ENCODE measurements at regions of chr12 and their contacts with region 1.

Region 1: DNA sequence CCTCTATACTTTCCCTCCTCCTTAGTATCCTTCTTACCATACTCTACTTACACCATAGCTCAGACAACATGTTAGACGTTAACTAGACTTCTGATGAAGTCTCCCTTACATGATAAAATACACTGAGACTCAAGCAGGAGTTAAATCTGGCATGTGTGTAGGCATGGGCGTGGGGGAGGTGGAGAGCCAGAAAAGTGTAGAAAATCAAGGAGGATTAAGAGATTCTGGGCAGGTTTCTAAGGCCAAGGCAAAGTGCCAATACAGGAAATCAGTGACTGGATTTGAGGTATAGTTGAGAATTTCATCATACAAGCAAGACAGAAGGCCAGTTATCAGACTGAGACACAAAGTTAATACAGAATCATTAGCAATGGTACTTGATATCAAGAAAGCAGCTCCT is 37.4 kb downstream of the EPS8 start:
- DNase-seq: no peak
- H3K4me3 ChIP-seq: no peak overlapping the region
- H3K27ac ChIP-seq: no peak overlapping the region
- H3K4me1 ChIP-seq: peaks cover 0 to 100% (median 54%) of the 10 kb centered on the region in 4 donors
- H3K27me3 ChIP-seq: no peaks in the 10 kb centered on the region
- CTCF ChIP-seq: no peak

Region 2: DNA sequence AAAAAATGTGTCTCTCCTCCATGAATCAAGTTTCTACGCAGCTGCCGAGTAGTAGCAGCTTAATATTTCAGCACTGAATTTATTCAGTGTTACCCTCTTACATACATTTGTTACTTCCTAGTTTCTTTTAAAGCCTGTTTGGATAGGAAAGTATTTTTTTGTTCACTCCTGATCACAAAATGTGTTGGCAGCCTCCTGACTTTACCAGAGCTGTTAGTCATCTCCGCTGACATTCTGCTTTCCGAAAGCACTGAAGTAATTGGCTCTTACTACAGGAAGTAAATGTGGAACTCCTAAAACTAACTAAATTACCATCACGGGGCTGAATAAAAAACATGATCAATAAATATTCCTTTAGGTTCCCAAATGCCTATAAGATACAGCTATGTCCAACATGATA is 188.1 kb before region 1 on chr12:
- intact Hi-C with region 1: no loop called
- DNase-seq: peak in 1 of 2 donors; percentile 29
- H3K4me3 ChIP-seq: peak overlapping the region; percentile 24 to 29
- H3K27ac ChIP-seq: peak overlapping the region; percentile 46 to 48
- H3K4me1 ChIP-seq: peaks cover 0 to 32% (median 5%) of the 10 kb centered on the region in 4 donors
- H3K27me3 ChIP-seq: no peaks in the 10 kb centered on the region
- CTCF ChIP-seq: no peak

Region 3: DNA sequence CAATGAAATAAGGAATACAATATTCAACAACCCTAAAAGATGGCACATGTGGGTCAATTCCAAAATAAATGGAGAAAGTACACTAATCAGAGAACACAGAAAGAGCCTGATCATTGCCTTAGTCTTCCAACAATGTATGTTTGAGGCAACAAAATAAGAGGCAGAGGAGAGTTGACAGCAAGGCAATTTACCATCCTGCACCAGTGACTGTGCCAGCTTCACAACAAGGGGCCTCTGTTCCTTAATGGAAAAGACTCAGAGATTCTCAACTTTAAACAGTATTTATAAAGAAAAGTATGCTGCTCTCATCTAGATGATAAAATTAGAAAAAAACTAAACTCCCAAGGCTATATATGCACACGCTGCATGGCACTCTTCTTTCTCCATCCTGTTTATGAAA is 11.6 kb after region 1 on chr12:
- intact Hi-C with region 1: loop called (anchors 1 kb)
- DNase-seq: no peak
- H3K4me3 ChIP-seq: no peak overlapping the region
- H3K27ac ChIP-seq: no peak overlapping the region
- H3K4me1 ChIP-seq: peaks cover 0 to 71% (median 19%) of the 10 kb centered on the region in 4 donors
- H3K27me3 ChIP-seq: no peaks in the 10 kb centered on the region
- CTCF ChIP-seq: no peak

Measured in tibial artery (tissue), 4 donors.